ENCODE measurements at regions of chr21 and their contacts with region 1.

Region 1: DNA sequence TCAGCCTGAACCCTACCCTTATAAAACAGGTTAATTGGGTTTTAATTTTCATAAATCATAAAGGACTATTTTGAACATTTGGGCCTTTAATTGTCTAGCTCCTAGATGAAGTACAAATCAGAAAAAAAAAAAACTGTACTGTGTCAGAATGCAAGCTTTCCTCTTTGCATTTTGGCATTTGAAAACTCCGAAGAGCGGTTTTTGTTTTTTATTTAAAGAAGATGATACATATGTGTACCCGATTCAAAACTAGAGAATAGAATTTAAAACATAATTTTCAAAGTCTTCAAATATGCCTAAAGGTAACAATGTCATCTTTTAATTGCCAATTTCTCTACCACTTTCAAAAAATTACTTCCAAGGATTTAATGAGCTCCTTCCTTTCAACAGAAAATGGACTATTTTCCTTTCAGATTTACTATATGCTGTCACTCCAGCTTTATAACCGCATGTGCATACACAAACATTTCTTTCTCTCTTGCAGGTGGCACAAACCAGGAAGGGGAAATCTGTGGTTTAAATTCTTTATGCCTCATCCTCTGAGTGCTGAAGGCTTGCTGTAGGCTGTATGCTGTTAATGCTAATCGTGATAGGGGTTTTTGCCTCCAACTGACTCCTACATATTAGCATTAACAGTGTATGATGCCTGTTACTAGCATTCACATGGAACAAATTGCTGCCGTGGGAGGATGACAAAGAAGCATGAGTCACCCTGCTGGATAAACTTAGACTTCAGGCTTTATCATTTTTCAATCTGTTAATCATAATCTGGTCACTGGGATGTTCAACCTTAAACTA is 33.7 kb downstream of the MRPL39 start:
- DNase-seq: peak in 9 of 14 experiments; percentile 6 to 84 (median 22)
- ATAC-seq: peak; percentile 83
- H3K4me3 ChIP-seq: peak overlapping the region; percentile 32
- H3K4me3 Mint-ChIP-seq: peak overlapping the region; percentile 84
- H3K27ac ChIP-seq: peak overlapping the region; percentile 59 to 82
- H3K27ac Mint-ChIP-seq: peak overlapping the region; percentile 85
- H3K4me1 ChIP-seq: peaks cover 8% of the 10 kb centered on the region
- H3K4me1 Mint-ChIP-seq: peaks cover 73% of the 10 kb centered on the region
- H3K27me3 ChIP-seq: no peaks in the 10 kb centered on the region
- H3K27me3 Mint-ChIP-seq: no peaks in the 10 kb centered on the region
- CTCF ChIP-seq: no peak

Region 2: GRCh38 chr21:25421327-25422028 is 152.1 kb before region 1 on chr21:
- CTCF ChIA-PET with region 1: no interaction called
- POLR2A ChIA-PET with region 1: no interaction called
- intact Hi-C with region 1: loop called in 1 of 2 experiments (anchors 5 kb)
- DNase-seq: peak in 13 of 14 experiments; percentile 14 to 84 (median 39)
- ATAC-seq: peak; percentile 94
- H3K4me3 ChIP-seq: no peak overlapping the region
- H3K4me3 Mint-ChIP-seq: no peak overlapping the region
- H3K27ac ChIP-seq: no peak overlapping the region
- H3K27ac Mint-ChIP-seq: peak overlapping the region; percentile 16
- H3K4me1 ChIP-seq: peaks cover 4% of the 10 kb centered on the region
- H3K4me1 Mint-ChIP-seq: peaks cover 13% of the 10 kb centered on the region
- H3K27me3 ChIP-seq: no peaks in the 10 kb centered on the region
- H3K27me3 Mint-ChIP-seq: no peaks in the 10 kb centered on the region
- CTCF ChIP-seq: peak; percentile 62

Region 3: GRCh38 chr21:25457411-25457810 is 116.2 kb before region 1 on chr21:
- CTCF ChIA-PET with region 1: no interaction called
- POLR2A ChIA-PET with region 1: no interaction called
- intact Hi-C with region 1: loop called in 1 of 2 experiments (anchors 5 kb)
- DNase-seq: peak in 3 of 14 experiments; percentile 81 to 86 (median 83)
- ATAC-seq: peak; percentile 90
- H3K4me3 ChIP-seq: peak overlapping the region; percentile 38
- H3K4me3 Mint-ChIP-seq: peak overlapping the region; percentile 76
- H3K27ac ChIP-seq: peak overlapping the region; percentile 26 to 63
- H3K27ac Mint-ChIP-seq: peak overlapping the region; percentile 73
- H3K4me1 ChIP-seq: peaks cover 11% of the 10 kb centered on the region
- H3K4me1 Mint-ChIP-seq: peaks cover 24% of the 10 kb centered on the region
- H3K27me3 ChIP-seq: no peaks in the 10 kb centered on the region
- H3K27me3 Mint-ChIP-seq: no peaks in the 10 kb centered on the region
- CTCF ChIP-seq: no peak

Region 4: GRCh38 chr21:25561668-25562641 is 11.7 kb before region 1 on chr21:
- CTCF ChIA-PET with region 1: interaction called, 4 read pairs
- POLR2A ChIA-PET with region 1: interaction called, 31 read pairs
- intact Hi-C with region 1: loop called in 1 of 2 experiments (anchors 1 kb)
- DNase-seq: peak; percentile 28 to 91 (median 47)
- ATAC-seq: peak; percentile 69
- H3K4me3 ChIP-seq: peak overlapping the region; percentile 71
- H3K4me3 Mint-ChIP-seq: peak overlapping the region; percentile 97
- H3K27ac ChIP-seq: peak overlapping the region; percentile 60 to 65
- H3K27ac Mint-ChIP-seq: peak overlapping the region; percentile 84
- H3K4me1 ChIP-seq: peaks cover 43% of the 10 kb centered on the region
- H3K4me1 Mint-ChIP-seq: peaks cover 69% of the 10 kb centered on the region
- H3K27me3 ChIP-seq: no peaks in the 10 kb centered on the region
- H3K27me3 Mint-ChIP-seq: no peaks in the 10 kb centered on the region
- CTCF ChIP-seq: no peak